Endothelial cell of umbilical vein (primary cell): ENCODE measurements at regions of chr19 and their contacts with region 1.

Region 1: GRCh38 chr19:45730389-45731288 is at the start of gene FBXO46:
- DNase-seq: peak; percentile 99
- H3K4me3 ChIP-seq: peak within 1 kb of the TSS; percentile 81 to 83 (median 82)
- H3K27ac ChIP-seq: peak within 1 kb of the TSS; percentile 28
- H3K4me1 ChIP-seq: peaks cover 6% of the 10 kb centered on the region
- H3K27me3 ChIP-seq: no peaks in the 10 kb centered on the region
- CTCF ChIP-seq: peak in 1 of 2 donors; percentile 36
- POLR2A ChIP-seq: peak; percentile 30
- total RNA-seq, gene FBXO46: 18.3 and 21.2 TPM in 2 replicates

Region 2: DNA sequence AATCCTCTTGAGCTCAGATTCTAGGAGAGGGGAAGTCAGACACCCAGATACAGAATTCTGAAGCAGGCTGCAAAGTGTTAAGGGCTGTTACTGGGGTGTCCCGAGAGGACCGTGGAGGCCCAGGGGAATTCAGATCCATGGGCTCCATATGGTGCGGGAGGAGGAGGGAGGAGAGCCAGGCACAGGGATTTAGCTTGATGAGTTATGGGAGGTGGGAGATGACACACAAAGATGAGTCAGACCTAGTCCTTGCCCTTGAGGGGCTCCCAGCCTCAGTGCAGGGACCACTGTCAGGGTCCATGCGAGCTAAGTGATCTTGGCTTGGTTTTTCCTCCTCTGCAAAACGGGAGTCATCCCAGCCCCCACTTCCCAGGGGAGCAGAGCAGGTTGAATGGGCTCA is 77.0 kb before region 1 on chr19:
- CTCF ChIA-PET with region 1: no interaction called
- POLR2A ChIA-PET with region 1: no interaction called
- dilution Hi-C with region 1: no loop called
- intact Hi-C with region 1: no loop called
- DNase-seq: no peak
- H3K4me3 ChIP-seq: no peak overlapping the region
- H3K27ac ChIP-seq: no peak overlapping the region
- H3K4me1 ChIP-seq: no peaks in the 10 kb centered on the region
- H3K27me3 ChIP-seq: peaks cover 0 to 2% of the 10 kb centered on the region in 2 experiments
- CTCF ChIP-seq: no peak
- POLR2A ChIP-seq: no peak

Region 3: GRCh38 chr19:45705115-45705514 is 25.5 kb before region 1 on chr19:
- CTCF ChIA-PET with region 1: no interaction called
- POLR2A ChIA-PET with region 1: no interaction called
- dilution Hi-C with region 1: no loop called
- intact Hi-C with region 1: no loop called
- DNase-seq: no peak
- H3K4me3 ChIP-seq: no peak overlapping the region
- H3K27ac ChIP-seq: no peak overlapping the region
- H3K4me1 ChIP-seq: no peaks in the 10 kb centered on the region
- H3K27me3 ChIP-seq: no peaks in the 10 kb centered on the region
- CTCF ChIP-seq: no peak
- POLR2A ChIP-seq: no peak

Region 4: DNA sequence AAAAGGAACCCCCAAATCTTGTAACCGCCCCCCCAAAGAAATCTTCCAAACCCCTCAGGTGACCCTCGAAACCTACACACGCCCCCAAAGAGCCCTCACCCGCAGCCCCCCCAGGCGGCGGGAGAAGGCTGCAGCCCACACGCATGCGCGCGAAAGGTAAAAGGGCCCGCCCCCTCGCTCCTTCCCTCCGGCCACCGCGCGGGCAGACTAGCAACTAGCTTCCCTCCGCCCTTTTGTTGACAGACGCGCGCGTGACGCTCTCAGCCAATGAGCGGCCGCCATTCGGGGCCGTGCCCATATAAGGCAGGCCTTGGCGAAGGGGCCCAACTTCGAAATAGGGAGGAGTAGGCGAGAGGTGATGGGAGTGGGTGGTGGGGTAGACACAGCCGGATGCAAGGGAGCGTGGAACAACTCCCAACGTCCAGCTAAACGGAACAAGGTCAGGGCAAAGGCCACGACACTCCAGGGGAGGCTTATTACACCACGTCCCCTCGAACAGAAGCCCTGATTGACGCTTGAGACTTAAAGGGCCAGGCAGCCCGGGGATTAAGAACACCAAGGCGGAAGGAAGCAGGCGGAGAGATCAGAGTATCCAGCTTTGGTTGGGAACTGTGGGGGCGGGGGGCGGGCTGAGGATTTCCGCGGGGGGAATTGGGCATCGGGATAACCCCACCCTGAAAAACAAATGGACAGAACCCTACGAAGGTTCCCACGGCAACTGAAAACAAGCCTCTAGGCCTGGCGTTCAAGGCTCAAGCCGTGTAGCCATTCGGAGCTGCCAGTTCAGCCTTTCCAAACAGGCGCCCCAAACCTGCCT is 13.3 kb before region 1 on chr19:
- CTCF ChIA-PET with region 1: interaction called, 10 read pairs
- POLR2A ChIA-PET with region 1: interaction called, 5 read pairs
- dilution Hi-C with region 1: no loop called
- intact Hi-C with region 1: no loop called
- DNase-seq: peak; percentile 100
- H3K4me3 ChIP-seq: peak overlapping the region; percentile 54 to 93 (median 61)
- H3K27ac ChIP-seq: peak overlapping the region; percentile 43
- H3K4me1 ChIP-seq: peaks cover 20% of the 10 kb centered on the region
- H3K27me3 ChIP-seq: no peaks in the 10 kb centered on the region
- CTCF ChIP-seq: peak in 1 of 2 donors; percentile 33
- POLR2A ChIP-seq: no peak